CD14-positive monocyte (primary cell): ENCODE measurements at regions of chr17 and their contacts with region 1.

Region 1: DNA sequence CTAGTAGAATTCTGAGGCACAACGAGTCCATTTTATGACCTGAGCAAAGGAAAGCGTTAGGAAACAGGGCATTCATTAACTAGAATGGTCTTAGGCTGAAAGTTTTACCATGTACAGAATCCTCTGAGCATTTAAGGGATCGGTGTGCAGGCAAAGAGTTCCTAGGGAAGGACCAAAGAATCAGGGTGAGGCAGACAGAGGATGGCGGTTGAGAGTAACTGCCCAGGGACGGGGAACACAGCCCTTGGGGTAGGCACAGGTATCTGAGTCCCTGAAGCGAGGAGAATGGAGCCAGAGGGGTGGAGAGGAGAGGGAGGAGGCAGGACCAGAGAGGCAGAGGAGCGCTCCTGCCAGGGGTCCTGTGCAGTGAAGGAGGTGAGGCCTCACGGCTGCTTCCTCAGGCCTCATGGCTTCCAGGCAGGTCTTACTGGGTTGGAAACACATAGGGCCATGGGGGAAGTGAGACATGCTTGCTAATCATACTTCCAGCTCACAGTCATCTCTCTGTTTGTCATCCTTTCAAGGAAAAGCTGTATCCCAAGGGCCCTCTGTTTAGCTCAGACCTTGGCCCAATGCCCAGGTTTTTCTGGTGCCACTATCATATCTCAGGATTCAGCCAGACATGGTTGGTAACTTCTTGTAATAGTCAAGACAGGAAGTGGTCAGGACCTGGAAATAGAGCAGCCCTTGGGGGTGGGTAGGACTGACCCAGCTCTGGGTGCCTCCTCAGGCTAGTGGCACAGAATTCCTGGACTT is 13.8 kb upstream of the ITGB3 start:
- DNase-seq: peak in 2 of 3 donors; percentile 11 to 58
- H3K4me3 ChIP-seq: no peak overlapping the region
- H3K4me3 Mint-ChIP-seq: no peak overlapping the region
- H3K27ac ChIP-seq: no peak overlapping the region
- H3K27ac Mint-ChIP-seq: no peak overlapping the region
- H3K4me1 ChIP-seq: peaks cover 13 to 16% of the 10 kb centered on the region in 2 donors
- H3K4me1 Mint-ChIP-seq: peaks cover 18% of the 10 kb centered on the region
- H3K27me3 ChIP-seq: no peaks in the 10 kb centered on the region
- H3K27me3 Mint-ChIP-seq: peaks cover 3 to 5% (median 5%) of the 10 kb centered on the region in 3 donors
- CTCF ChIP-seq: no peak

Region 2: GRCh38 chr17:45261577-45262515 is 1978.0 kb before region 1 on chr17 and contains the start of gene SPATA32:
- intact Hi-C with region 1: no loop called
- DNase-seq: peak in 2 of 3 donors; percentile 30 to 33
- H3K4me3 ChIP-seq: peak within 1 kb of the TSS; percentile 47 to 85 (median 48)
- H3K4me3 Mint-ChIP-seq: peak within 1 kb of the TSS; percentile 88 to 92
- H3K27ac ChIP-seq: peak within 1 kb of the TSS in 1 of 2 donors; percentile 56
- H3K27ac Mint-ChIP-seq: peak within 1 kb of the TSS in 4 of 7 donors; percentile 24 to 64 (median 58)
- H3K4me1 ChIP-seq: peaks cover 7 to 31% of the 10 kb centered on the region in 2 donors
- H3K4me1 Mint-ChIP-seq: peaks cover 30% of the 10 kb centered on the region
- H3K27me3 ChIP-seq: peaks cover 0 to 5% of the 10 kb centered on the region in 2 donors
- H3K27me3 Mint-ChIP-seq: peaks cover 4 to 15% (median 8%) of the 10 kb centered on the region in 3 donors
- CTCF ChIP-seq: no peak
- polyA plus RNA-seq, gene SPATA32: not detected

Region 3: GRCh38 chr17:47162013-47162622 is 77.7 kb before region 1 on chr17:
- intact Hi-C with region 1: no loop called
- DNase-seq: no peak
- H3K4me3 ChIP-seq: peak overlapping the region in 1 of 3 experiments; percentile 12
- H3K4me3 Mint-ChIP-seq: peak overlapping the region; percentile 49 to 69
- H3K27ac ChIP-seq: peak overlapping the region in 1 of 2 donors; percentile 55
- H3K27ac Mint-ChIP-seq: peak overlapping the region; percentile 36 to 91 (median 74)
- H3K4me1 ChIP-seq: no peaks in the 10 kb centered on the region
- H3K4me1 Mint-ChIP-seq: peaks cover 5% of the 10 kb centered on the region
- H3K27me3 ChIP-seq: no peaks in the 10 kb centered on the region
- H3K27me3 Mint-ChIP-seq: peaks cover 0 to 3% (median 0%) of the 10 kb centered on the region in 3 donors
- CTCF ChIP-seq: no peak

Region 4: DNA sequence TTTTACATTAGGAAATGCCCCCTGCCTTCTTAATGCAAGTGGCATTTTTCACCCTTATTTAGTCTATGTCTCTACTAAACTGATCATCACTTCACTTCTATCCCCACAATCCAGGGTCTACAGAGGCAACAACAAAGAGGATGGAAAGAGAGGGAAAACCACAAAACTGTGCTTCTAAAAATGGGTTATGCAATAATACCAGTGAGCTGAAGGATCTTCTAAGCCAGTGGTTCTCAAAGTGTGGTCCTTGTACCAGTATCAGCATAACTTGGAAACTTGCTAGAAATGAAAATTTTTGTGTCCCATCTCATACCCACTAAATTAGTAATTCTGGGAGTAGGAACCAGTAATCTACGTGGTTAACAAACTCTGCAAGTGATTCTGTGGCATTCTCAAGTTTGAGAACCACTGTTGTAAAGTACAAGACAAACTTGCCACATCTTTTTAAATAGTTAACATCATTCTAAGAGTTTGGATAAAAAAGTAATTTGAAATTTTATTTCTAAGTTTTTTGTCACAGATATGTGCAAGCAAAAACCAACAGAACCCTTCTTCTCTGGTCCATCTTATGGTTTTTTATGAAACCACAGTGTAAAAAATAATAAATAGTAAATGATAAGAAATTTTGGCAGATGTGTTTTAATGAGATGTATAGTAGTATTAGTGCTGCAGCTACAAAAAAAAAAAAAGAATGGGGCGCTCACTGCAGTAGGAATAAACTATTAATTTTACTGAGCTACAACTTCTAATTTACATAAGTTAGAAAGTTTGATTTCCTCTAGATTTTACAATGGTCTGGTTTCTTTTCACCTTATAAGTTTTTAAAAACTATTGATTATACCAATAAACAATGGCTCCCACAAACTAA is 66.9 kb before region 1 on chr17:
- intact Hi-C with region 1: no loop called
- DNase-seq: no peak
- H3K4me3 ChIP-seq: no peak overlapping the region
- H3K4me3 Mint-ChIP-seq: no peak overlapping the region
- H3K27ac ChIP-seq: peak overlapping the region in 1 of 2 donors; percentile 44
- H3K27ac Mint-ChIP-seq: peak overlapping the region in 1 of 7 donors; percentile 18
- H3K4me1 ChIP-seq: peaks cover 5 to 16% of the 10 kb centered on the region in 2 donors
- H3K4me1 Mint-ChIP-seq: peaks cover 18% of the 10 kb centered on the region
- H3K27me3 ChIP-seq: no peaks in the 10 kb centered on the region
- H3K27me3 Mint-ChIP-seq: no peaks in the 10 kb centered on the region
- CTCF ChIP-seq: no peak

Region 5: DNA sequence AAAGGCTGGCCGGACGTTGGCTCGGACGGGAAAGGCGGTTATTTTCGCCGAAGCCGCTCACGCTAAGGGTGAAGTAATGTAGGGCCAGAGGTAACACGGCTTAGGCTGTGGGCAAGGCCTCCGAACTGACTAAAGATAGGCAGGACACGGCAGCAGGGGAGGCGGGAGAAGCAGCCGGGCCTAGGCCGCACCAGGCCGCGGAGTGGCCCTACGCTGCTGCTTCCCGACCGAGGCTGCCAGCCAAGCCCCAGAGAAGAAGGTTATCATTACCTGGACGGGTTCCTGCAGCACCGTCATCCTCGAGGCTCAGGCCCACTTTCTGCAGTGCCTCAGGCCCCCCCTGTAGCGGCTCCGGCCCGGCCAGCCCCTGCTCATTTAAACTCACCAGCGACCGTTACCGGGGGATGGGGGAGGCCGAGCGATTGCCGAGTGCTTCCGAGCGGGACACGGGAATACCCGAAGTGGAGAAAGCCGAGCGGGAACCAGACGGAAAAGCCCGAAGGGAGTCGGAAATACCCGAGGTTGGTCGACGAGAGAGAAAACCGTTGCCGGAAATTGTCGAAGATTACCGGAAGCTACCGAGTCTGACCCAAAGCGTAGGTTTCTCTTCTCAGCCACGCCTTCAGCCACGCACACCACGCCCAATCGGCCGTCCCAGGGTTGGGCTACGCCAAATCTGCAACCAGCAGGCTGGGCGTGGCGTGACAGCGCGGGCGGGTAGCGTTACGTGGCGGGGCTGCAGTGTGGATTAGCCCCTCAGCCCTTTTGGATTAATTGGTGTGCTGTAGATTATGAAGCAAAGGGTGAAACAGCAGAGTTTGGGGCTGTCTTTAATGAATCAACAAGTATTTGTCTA is 50.7 kb before region 1 on chr17 and contains the start of gene CDC27:
- intact Hi-C with region 1: no loop called
- DNase-seq: peak; percentile 99 to 100 (median 99)
- H3K4me3 ChIP-seq: peak within 1 kb of the TSS; percentile 47 to 89 (median 82)
- H3K4me3 Mint-ChIP-seq: peak within 1 kb of the TSS; percentile 89 to 97
- H3K27ac ChIP-seq: peak within 1 kb of the TSS; percentile 98 to 99
- H3K27ac Mint-ChIP-seq: peak within 1 kb of the TSS; percentile 99 to 100 (median 99)
- H3K4me1 ChIP-seq: peaks cover 10 to 29% of the 10 kb centered on the region in 2 donors
- H3K4me1 Mint-ChIP-seq: peaks cover 38% of the 10 kb centered on the region
- H3K27me3 ChIP-seq: no peaks in the 10 kb centered on the region
- H3K27me3 Mint-ChIP-seq: peaks cover 2 to 5% (median 3%) of the 10 kb centered on the region in 3 donors
- CTCF ChIP-seq: no peak
- polyA plus RNA-seq, gene CDC27: 19.7 to 52.0 (median 33.0) TPM

Region 6: GRCh38 chr17:47295062-47295845 is 55.5 kb after region 1 on chr17:
- intact Hi-C with region 1: loop called in 1 of 2 experiments (anchors 10 kb)
- DNase-seq: no peak
- H3K4me3 ChIP-seq: no peak overlapping the region
- H3K4me3 Mint-ChIP-seq: no peak overlapping the region
- H3K27ac ChIP-seq: no peak overlapping the region
- H3K27ac Mint-ChIP-seq: no peak overlapping the region
- H3K4me1 ChIP-seq: no peaks in the 10 kb centered on the region
- H3K4me1 Mint-ChIP-seq: peaks cover 7% of the 10 kb centered on the region
- H3K27me3 ChIP-seq: no peaks in the 10 kb centered on the region
- H3K27me3 Mint-ChIP-seq: peaks cover 1 to 5% (median 2%) of the 10 kb centered on the region in 3 donors
- CTCF ChIP-seq: no peak